HEK293T (cell line): ENCODE measurements at regions of chr19 and their contacts with region 1.

Region 1: DNA sequence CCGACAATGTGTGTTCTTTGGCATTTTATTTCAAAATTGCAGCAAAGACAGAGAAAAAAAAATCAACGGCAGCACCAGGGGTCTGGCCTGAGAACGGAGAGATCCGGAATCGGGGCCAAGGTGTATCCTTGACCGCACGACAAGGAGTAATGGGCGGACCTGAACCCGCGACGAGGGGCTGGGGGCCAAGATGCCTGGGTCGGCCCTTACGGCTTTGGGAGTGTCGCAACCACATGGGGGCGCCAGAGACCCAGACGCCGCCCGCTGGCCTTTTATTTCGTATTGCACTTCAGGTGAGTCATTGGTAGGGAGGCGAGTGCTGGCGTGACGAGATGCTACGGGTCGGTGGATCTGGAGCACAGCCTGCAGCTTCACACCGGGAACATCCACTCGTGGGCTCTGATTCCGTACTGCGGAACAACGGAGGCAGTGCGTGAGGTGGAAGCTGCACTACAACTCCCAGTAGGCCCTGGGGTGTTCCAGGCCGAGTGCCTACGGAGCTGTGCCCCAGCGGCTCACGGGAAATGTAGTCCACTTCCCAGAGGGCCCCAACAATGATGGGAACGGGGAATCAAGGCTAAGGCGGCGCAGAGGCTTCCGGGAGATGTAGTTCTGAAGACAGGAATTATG is 15.7 kb downstream of the BCAT2 start:
- DNase-seq: peak; percentile 92

Region 2: GRCh38 chr19:48770260-48770659 is 24.9 kb before region 1 on chr19:
- CTCF ChIA-PET with region 1: no interaction called
- POLR2A ChIA-PET with region 1: no interaction called
- DNase-seq: no peak

Region 3: GRCh38 chr19:48806518-48806817 is 11.3 kb after region 1 on chr19:
- CTCF ChIA-PET with region 1: interaction called, 10 read pairs
- POLR2A ChIA-PET with region 1: interaction called, 14 read pairs
- DNase-seq: no peak

Region 4: DNA sequence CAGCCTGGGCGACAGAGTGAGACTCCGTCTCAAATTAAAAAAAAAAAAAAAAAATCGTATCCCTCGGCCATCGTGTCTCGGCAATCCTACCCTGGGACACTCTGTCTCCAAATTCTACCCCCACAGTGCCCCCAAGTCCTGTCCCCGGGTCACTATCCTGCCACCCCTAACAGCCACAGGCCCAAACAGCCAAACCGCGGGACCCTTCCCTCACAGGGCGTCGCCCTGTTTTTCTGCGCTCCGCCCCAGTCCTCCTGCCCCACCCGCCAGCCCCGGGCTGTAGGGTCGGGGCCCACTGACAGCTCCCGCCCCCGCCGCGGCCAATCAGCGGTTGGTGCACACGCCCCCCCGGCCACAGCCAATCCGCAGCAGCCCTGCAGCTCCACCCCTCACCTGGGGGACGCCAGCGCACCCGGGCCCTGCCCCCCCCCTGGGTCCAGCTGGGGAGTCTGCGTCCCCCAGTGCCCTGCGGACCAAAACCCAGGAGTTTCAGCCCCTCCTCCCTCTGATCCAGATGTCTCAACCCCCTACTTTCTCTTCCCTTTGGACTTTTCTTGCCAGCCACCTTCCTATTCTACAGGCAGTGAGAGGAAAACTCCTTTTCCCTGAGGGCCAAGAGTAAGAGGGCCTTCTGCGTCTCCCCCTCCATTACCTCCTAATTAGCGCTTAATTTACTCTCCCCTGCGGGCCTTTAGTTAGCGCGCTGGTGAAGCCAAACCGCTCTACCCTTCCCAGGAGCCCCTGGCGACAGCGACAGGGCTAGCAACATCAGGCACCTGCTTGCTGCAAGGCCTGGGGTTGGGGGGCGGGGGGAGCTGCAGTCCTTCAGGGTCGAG is 17.1 kb after region 1 on chr19:
- CTCF ChIA-PET with region 1: interaction called, 10 read pairs
- POLR2A ChIA-PET with region 1: interaction called, 14 read pairs
- DNase-seq: peak; percentile 83

Region 5: GRCh38 chr19:48822514-48822913 is 27.3 kb after region 1 on chr19:
- CTCF ChIA-PET with region 1: no interaction called
- POLR2A ChIA-PET with region 1: no interaction called
- DNase-seq: no peak